Natural killer cell (primary cell): ENCODE measurements at regions of chr6 and their contacts with region 1.

Region 1: GRCh38 chr6:11381801-11382513 is 149.5 kb upstream of the NEDD9 start:
- DNase-seq: peak; percentile 66 to 90
- ATAC-seq: peak; percentile 89 to 96 (median 93)
- H3K4me3 ChIP-seq: peak overlapping the region; percentile 77
- H3K4me3 Mint-ChIP-seq: peak overlapping the region; percentile 97
- H3K27ac ChIP-seq: peak overlapping the region; percentile 90
- H3K27ac Mint-ChIP-seq: peak overlapping the region; percentile 95 to 97
- H3K4me1 ChIP-seq: peaks cover 43% of the 10 kb centered on the region
- H3K4me1 Mint-ChIP-seq: peaks cover 52 to 59% of the 10 kb centered on the region in 2 donors
- H3K27me3 ChIP-seq: no peaks in the 10 kb centered on the region
- H3K27me3 Mint-ChIP-seq: peaks cover 0 to 8% of the 10 kb centered on the region in 2 donors
- CTCF ChIP-seq: no peak

Region 2: DNA sequence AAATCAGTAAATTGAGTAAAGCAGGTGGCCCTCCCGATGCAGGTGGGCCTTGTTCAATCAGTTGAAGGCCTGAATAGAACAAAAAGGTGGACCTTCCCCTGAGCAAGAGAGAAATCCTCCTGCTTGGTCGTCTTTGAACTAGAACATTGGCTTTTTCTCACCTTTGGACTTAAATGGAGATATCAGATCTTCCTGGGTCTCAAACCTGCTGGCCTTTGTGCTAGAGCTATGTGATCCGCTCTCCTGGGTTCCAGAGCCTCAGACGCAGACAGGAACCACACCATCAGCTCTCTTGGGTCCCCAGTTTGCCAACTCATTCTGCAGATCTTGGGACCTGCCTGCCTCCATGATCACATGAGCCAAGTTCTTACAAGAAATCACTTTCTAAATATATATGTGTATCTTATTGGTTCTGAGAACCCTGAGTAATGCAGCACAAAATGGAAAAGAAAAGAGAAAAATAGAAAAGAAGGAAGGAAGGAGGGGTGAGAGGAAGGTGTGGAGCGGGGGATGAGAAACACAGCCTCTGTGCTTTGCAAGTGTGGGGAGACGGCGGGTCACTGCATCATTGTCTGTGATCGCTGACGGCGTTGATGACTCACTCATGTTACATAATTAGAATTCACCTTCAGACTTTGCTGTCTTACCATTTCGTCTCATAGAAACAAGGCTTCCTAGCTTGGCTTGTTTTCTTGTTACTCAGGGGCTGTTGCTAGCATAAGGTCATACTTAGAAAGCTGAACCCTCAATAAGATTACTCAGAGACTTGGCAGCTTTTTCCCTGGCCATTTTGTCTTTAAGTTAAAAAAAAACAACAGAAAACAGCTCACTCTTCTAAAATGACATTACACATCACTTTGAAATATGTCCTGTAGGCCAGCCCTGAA is 63.8 kb before region 1 on chr6:
- intact Hi-C with region 1: loop called (anchors 5 kb)
- DNase-seq: peak; percentile 35 to 83
- ATAC-seq: peak; percentile 87 to 89 (median 88)
- H3K4me3 ChIP-seq: no peak overlapping the region
- H3K4me3 Mint-ChIP-seq: no peak overlapping the region
- H3K27ac ChIP-seq: peak overlapping the region; percentile 30
- H3K27ac Mint-ChIP-seq: peak overlapping the region; percentile 27 to 85
- H3K4me1 ChIP-seq: peaks cover 19% of the 10 kb centered on the region
- H3K4me1 Mint-ChIP-seq: peaks cover 53 to 59% of the 10 kb centered on the region in 2 donors
- H3K27me3 ChIP-seq: no peaks in the 10 kb centered on the region
- H3K27me3 Mint-ChIP-seq: no peaks in the 10 kb centered on the region
- CTCF ChIP-seq: no peak